GM10248 (cell line): ENCODE measurements at regions of chr13 and their contacts with region 1.

Region 1: GRCh38 chr13:22193070-22193469 is 522.2 kb downstream of the FGF9 start:
- DNase-seq: no peak
- CTCF ChIP-seq: no peak

Region 2: GRCh38 chr13:22210134-22210930 is 17.3 kb after region 1 on chr13:
- CTCF ChIA-PET with region 1: interaction called, 11 read pairs
- POLR2A ChIA-PET with region 1: no interaction called
- DNase-seq: no peak
- CTCF ChIP-seq: no peak